Posterior vena cava (tissue), 2 donors: ENCODE measurements at regions of chr21 and their contacts with region 1.

Region 1: DNA sequence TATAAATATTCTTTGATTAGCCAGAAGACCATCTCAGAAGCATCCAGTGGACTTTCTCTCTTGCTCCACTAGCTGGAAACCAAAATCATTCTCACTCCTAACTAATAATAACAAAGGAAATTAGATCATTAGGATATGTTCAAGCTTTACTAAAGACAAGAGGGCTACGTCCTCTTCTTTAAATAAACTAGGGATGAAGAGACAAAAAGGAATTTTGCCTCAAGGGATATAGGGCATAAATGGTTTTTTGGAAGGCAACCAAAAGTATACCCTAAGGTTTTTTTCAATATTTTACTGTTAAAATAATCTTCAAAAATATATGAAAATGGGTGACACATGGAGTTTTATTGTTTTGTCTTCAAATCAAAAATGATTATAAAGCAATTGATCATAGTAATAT is 745.8 kb downstream of the MRPL39 start:
- DNase-seq: no peak

Region 2: GRCh38 chr21:24183077-24183476 is 678.4 kb before region 1 on chr21:
- intact Hi-C with region 1: no loop called
- DNase-seq: no peak

Region 3: GRCh38 chr21:24470852-24471251 is 390.6 kb before region 1 on chr21:
- intact Hi-C with region 1: loop called in 1 of 2 experiments (anchors 5 kb)
- DNase-seq: no peak